ENCODE measurements at regions of chr16 and their contacts with region 1.

Region 1: DNA sequence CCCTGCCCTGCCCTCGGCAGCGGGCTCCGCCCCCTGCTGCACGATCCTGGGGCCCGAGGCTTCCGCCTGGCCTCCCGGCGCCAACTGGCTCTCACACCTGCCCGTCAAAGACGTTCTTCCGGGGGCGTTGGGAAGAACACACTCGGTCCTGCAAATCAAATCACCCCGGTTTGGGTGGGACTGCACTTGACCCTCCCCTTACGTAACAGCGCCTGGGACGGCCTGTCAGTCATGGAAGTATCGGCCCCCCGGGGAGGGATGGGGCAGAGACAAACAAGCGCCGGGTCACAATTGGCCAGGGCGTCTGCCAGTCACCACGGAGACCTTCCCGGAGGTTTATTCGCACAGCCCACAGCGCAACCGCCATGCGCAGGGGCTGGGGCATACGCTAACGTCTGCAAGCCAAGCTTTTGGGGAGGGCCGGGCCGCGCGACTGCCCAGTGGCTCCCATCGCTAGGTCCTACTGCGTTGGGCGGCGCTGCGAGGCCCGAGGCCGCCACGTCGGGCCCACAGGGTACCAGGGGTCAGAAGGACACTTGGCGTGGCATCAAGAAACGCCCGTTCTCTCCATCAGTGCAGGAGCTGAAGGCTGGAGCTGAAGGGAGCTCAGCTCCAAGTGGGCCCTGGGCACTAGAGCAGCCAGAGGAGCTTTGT is 388 bp upstream of the AKTIP start:
- DNase-seq: peak; percentile 100
- H3K4me3 Mint-ChIP-seq: peak overlapping the region; percentile 95
- H3K27ac Mint-ChIP-seq: peak overlapping the region; percentile 93
- H3K4me1 Mint-ChIP-seq: peaks cover 54% of the 10 kb centered on the region
- H3K27me3 Mint-ChIP-seq: no peaks in the 10 kb centered on the region

Region 2: DNA sequence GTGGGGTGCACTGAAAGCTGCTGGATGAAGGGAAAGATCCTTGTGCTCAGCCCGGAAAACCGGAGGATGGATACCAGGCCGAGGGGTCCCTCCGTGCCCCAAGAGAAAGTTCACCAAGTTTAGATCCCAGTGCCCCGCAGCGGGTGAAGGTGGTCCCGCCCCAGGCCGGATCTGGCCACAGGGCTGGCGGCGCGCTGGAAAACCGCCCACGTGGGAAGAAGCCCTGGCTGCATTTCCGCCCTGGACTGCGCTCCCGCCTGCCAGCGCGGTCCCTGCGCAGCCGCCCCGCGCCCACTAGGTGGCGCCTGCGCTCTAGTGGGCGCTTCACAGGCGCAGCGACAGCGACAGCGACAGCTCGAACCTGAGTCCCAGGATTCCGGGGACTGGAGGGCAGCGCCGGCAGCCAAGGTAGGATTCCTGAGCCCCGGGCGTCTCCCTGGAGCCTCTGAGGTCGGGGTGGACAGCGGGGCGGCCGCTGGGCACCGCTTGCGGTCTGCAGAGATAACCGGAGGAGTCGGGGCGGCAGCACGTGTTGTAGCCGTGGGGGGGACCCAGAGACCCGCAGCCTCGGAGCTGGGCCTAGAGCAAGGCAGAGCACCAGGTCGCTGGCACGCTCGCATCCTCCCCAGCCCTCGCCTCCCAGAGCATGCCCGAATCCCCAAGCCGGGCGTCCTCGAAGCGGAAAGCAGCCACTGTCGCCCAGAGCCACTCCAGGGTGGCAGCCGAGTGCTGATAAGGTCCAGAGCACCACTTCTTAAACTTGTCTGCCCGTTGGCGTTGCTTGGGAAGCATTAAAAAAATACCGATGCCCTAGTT is 448.5 kb before region 1 on chr16 and contains the start of gene CHD9:
- CTCF ChIA-PET with region 1: no interaction called
- intact Hi-C with region 1: loop called (anchors 1 kb)
- DNase-seq: peak; percentile 72
- H3K4me3 Mint-ChIP-seq: peak within 1 kb of the TSS; percentile 80
- H3K27ac Mint-ChIP-seq: no peak within 1 kb of the TSS
- H3K4me1 Mint-ChIP-seq: peaks cover 18% of the 10 kb centered on the region
- H3K27me3 Mint-ChIP-seq: peaks cover 3% of the 10 kb centered on the region
- total RNA-seq, gene CHD9: 9.4 to 9.7 TPM

Region 3: DNA sequence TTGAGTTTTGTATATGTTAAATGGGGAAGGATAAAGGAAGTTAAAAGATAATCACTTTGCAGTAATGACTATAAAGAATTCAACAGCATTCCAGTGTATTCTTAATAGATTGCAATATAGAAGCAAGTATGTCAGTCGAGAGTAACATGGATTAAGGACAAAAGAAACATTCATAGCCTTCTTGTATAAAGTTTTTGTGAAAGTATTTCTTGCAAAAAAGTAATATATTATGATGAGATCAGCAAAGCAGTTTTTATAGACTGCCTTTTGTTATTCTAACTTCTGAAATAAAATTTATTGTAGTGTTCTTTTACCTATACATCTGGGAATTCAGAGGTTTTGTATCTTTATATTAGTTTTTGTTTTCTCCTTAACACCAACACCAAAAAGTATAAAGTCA is 254.1 kb before region 1 on chr16:
- CTCF ChIA-PET with region 1: no interaction called
- intact Hi-C with region 1: no loop called
- DNase-seq: no peak
- H3K4me3 Mint-ChIP-seq: no peak overlapping the region
- H3K27ac Mint-ChIP-seq: no peak overlapping the region
- H3K4me1 Mint-ChIP-seq: no peaks in the 10 kb centered on the region
- H3K27me3 Mint-ChIP-seq: no peaks in the 10 kb centered on the region

Region 4: GRCh38 chr16:53291757-53292392 is 211.5 kb before region 1 on chr16:
- CTCF ChIA-PET with region 1: no interaction called
- intact Hi-C with region 1: loop called (anchors 10 kb)
- DNase-seq: no peak
- H3K4me3 Mint-ChIP-seq: no peak overlapping the region
- H3K27ac Mint-ChIP-seq: no peak overlapping the region
- H3K4me1 Mint-ChIP-seq: no peaks in the 10 kb centered on the region
- H3K27me3 Mint-ChIP-seq: no peaks in the 10 kb centered on the region

Region 5: GRCh38 chr16:53435066-53435688 is 68.2 kb before region 1 on chr16:
- CTCF ChIA-PET with region 1: interaction called, 5 read pairs
- intact Hi-C with region 1: loop called (anchors 1 kb)
- DNase-seq: peak; percentile 71
- H3K4me3 Mint-ChIP-seq: peak overlapping the region; percentile 96
- H3K27ac Mint-ChIP-seq: peak overlapping the region; percentile 93
- H3K4me1 Mint-ChIP-seq: peaks cover 36% of the 10 kb centered on the region
- H3K27me3 Mint-ChIP-seq: no peaks in the 10 kb centered on the region

Region 6: GRCh38 chr16:53482123-53482522 is 21.3 kb before region 1 on chr16:
- CTCF ChIA-PET with region 1: no interaction called
- intact Hi-C with region 1: no loop called
- DNase-seq: no peak
- H3K4me3 Mint-ChIP-seq: no peak overlapping the region
- H3K27ac Mint-ChIP-seq: peak overlapping the region; percentile 1
- H3K4me1 Mint-ChIP-seq: peaks cover 14% of the 10 kb centered on the region
- H3K27me3 Mint-ChIP-seq: no peaks in the 10 kb centered on the region

Region 7: GRCh38 chr16:53518550-53519416 is 15.4 kb after region 1 on chr16:
- CTCF ChIA-PET with region 1: no interaction called
- intact Hi-C with region 1: loop called (anchors 1 kb)
- DNase-seq: peak; percentile 92
- H3K4me3 Mint-ChIP-seq: peak overlapping the region; percentile 64
- H3K27ac Mint-ChIP-seq: peak overlapping the region; percentile 90
- H3K4me1 Mint-ChIP-seq: peaks cover 36% of the 10 kb centered on the region
- H3K27me3 Mint-ChIP-seq: no peaks in the 10 kb centered on the region

Region 8: DNA sequence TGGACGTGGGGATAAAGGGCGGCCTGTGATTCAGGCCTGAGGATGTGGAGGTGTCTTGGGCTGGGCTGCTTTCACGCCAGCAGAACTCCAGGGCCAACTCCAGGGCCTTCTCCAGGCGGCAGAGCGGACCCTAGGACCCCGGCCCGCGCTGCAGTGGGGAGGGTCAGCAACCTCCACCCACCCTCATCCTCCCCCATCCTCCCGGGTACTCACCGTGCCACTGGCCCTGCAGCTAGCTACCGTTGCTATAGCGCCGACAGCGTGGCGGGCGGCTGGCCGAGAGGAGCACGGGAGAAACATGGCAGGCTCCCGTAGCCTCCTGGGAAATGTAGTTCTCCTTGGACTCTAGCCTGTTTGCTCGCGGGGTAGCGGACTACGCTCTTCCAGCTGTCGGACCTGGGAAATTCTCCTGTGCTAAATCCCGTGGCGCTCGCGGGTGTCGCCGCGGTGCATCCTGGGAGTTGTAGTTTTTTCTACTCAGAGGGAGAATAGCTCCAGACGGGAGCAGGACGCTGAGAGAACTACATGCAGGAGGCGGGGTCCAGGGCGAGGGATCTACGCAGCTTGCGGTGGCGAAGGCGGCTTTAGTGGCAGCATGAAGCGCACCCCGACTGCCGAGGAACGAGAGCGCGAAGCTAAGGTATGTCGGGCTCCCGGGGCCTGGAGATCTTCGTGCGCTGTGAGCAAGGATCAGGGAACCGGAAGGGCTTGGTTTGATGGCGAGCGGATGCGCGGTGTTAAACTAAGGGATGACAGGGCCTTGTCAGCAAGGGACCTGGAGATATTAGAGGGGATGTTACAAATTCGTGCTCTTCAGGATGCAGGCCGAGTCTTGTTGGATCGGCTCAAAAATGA is 200.4 kb after region 1 on chr16 and contains the starts of genes FTO and RPGRIP1L:
- CTCF ChIA-PET with region 1: no interaction called
- intact Hi-C with region 1: loop called (anchors 1 kb)
- DNase-seq: peak; percentile 99
- H3K4me3 Mint-ChIP-seq: peak within 1 kb of the TSS; percentile 100
- H3K27ac Mint-ChIP-seq: peak within 1 kb of the TSS; percentile 89
- H3K4me1 Mint-ChIP-seq: peaks cover 30% of the 10 kb centered on the region
- H3K27me3 Mint-ChIP-seq: no peaks in the 10 kb centered on the region
- total RNA-seq, gene FTO: 60.2 to 63.9 TPM
- total RNA-seq, gene RPGRIP1L: 4.3 to 5.2 TPM